Psoas muscle (tissue), 8 donors: ENCODE measurements at regions of chr2 and their contacts with region 1.

Region 1: DNA sequence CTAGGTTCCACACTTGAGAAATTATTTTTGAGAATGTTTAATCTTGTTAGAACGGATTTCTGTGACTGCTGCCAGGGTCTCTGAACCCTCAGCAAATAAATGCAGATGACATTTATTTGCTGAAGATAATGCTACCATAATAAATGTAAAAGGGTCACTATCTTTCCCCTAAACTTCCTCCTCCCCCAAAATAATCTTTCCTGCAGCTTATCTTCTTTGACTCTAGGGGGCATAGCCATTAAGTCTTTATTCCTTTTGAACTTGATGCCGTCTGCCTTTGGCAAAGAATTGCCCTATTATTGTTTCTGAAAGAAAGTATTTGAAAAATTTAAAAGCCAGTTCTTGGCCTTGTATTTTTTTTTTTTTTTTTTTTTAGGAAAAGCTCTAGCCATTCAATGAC is 63.6 kb upstream of the ACSL3 start:
- DNase-seq: no peak
- ATAC-seq: peak in 2 of 4 donors; percentile 56 to 80
- H3K4me3 ChIP-seq: no peak overlapping the region
- H3K27ac ChIP-seq: peak overlapping the region; percentile 28
- H3K4me1 ChIP-seq: peaks cover 16% of the 10 kb centered on the region
- H3K27me3 ChIP-seq: no peaks in the 10 kb centered on the region
- CTCF ChIP-seq: peak; percentile 53

Region 2: GRCh38 chr2:222707689-222708525 is 89.4 kb before region 1 on chr2:
- intact Hi-C with region 1: loop called (anchors 5 to 10 kb)
- DNase-seq: peak; percentile 82 to 87
- ATAC-seq: peak; percentile 58 to 85 (median 64)
- H3K4me3 ChIP-seq: peak overlapping the region; percentile 53
- H3K27ac ChIP-seq: peak overlapping the region; percentile 88
- H3K4me1 ChIP-seq: peaks cover 3% of the 10 kb centered on the region
- H3K27me3 ChIP-seq: no peaks in the 10 kb centered on the region
- CTCF ChIP-seq: peak; percentile 97

Region 3: GRCh38 chr2:222753251-222753824 is 43.9 kb before region 1 on chr2:
- intact Hi-C with region 1: loop called in 1 of 2 experiments (anchors 5 kb)
- DNase-seq: no peak
- ATAC-seq: peak; percentile 57 to 80 (median 68)
- H3K4me3 ChIP-seq: no peak overlapping the region
- H3K27ac ChIP-seq: peak overlapping the region; percentile 68
- H3K4me1 ChIP-seq: peaks cover 18% of the 10 kb centered on the region
- H3K27me3 ChIP-seq: no peaks in the 10 kb centered on the region
- CTCF ChIP-seq: no peak

Region 4: DNA sequence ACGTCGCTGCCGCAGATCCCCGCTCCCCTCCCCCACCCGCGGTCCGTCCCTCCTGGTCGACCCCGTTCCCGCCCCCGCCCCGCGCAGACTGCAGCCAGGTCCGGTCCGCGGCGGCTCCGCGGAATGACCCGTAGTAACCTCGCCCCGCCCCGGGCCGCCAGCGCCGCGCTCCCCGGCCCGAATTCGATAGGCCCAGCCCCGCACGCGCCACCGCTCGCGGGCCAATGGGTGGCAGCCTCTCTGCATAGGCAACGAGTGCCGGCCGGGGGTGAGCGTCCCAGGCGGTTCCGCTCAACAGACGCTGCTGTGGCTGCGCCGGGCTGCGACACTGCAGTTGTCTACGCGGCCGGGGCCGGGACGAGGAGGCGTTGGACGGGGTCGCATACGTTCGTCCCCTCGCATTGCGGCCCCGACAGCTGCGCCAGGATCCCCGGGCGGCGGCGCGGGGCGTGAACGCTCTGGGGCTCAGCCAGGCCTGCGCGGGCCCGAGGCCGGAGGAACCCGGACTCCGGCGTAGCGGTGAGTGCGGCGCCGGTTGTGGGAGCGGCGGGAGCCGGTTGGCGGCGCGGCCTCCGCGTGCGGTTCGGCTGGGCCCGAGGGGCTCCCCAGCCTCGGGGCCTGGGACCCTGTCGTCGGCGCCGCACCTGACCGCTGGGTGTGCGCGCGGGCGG is 63.6 kb after region 1 on chr2 and contains the start of gene ACSL3:
- intact Hi-C with region 1: loop called in 1 of 2 experiments (anchors 5 kb)
- DNase-seq: peak; percentile 97 to 98
- ATAC-seq: peak; percentile 94 to 98 (median 96)
- H3K4me3 ChIP-seq: peak within 1 kb of the TSS; percentile 99
- H3K27ac ChIP-seq: peak within 1 kb of the TSS; percentile 99
- H3K4me1 ChIP-seq: peaks cover 45% of the 10 kb centered on the region
- H3K27me3 ChIP-seq: no peaks in the 10 kb centered on the region
- CTCF ChIP-seq: peak; percentile 12
- total RNA-seq, gene ACSL3: 25.3 to 136 (median 46.4) TPM

Region 5: DNA sequence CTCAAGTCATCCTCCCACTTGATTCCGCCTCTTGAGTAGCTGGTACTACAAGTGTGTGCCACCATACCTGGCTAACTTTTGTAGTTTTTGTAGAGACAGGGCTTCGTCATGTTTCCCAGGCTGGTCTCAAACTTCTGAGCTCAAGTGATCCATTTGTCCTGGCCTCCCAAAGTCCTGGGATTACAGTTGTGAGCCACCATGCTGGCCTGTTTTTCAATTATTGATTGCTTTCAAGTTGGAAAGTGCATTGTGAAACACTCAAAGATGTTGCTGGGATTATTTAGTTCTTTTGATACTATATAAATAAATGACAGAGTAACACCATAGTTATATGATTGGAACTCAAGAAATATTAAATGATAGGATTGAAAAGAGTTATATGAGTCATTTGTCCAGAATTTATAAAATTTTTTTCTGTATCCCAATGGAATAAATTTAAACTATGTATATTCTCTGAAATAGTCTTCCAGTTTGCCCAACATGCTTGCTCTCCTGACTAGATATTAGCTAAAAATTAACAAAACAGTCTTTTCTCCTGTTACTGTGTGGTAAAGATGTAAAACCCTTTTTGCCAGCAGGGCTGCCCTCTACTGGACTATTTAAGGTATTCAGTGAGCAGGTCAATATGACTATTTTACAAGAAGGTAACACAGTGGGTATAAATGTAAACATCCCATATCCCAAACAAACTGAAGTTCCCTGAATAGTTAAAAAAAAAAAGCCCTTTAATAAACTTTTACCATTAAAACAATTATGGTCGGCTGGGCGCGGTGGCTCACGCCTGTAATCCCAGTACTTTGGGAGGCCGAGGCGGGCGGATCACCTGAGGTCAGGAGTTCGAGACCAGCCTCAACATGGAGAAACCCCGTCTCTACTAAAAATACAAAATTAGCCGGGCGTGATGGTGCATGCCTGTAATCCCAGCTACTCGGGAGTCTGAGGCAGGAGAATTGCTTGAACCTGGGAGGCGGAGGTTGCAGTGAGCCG is 106.3 kb after region 1 on chr2:
- intact Hi-C with region 1: loop called in 1 of 2 experiments (anchors 5 kb)
- DNase-seq: no peak
- ATAC-seq: peak; percentile 60 to 85 (median 72)
- H3K4me3 ChIP-seq: no peak overlapping the region
- H3K27ac ChIP-seq: peak overlapping the region; percentile 33
- H3K4me1 ChIP-seq: peaks cover 30% of the 10 kb centered on the region
- H3K27me3 ChIP-seq: no peaks in the 10 kb centered on the region
- CTCF ChIP-seq: peak; percentile 67